Common myeloid progenitor, CD34-positive (primary cell): ENCODE measurements at regions of chr7 and their contacts with region 1.

Region 1: DNA sequence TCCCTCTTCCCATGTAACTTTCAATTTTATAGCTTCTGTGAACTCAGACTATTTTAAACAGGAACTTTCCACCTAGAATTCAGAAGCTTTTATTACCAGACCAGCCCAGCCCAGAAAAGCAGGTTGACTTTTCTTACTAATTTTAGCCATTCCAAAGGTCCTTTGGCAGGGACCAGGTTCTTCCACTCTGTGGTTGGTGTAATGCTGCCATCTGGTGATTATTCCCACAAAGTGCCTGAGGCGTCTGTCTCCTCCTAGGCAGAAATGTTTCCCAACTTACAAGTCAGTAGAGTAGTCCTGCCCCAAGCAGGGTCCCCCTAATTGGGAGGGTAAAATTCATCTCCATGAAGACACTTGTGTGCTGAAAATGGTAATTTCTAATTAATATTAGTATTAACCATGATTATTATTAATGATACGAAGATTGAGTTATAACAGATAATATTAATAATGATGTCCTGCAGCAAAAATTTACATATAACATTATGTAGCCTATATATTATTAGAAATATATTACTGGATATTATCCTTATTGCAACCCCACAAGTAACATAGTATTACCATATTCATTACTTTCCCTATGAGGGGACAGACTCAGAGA is 53.0 kb upstream of the PPP1R17 start:
- DNase-seq: peak; percentile 20 to 54 (median 32)
- H3K4me3 ChIP-seq: no peak overlapping the region
- H3K27ac ChIP-seq: no peak overlapping the region
- H3K4me1 ChIP-seq: no peaks in the 10 kb centered on the region
- H3K27me3 ChIP-seq: no peaks in the 10 kb centered on the region

Region 2: GRCh38 chr7:31134246-31135188 is 499.5 kb before region 1 on chr7:
- CTCF ChIA-PET with region 1: interaction called, 13 read pairs
- POLR2A ChIA-PET with region 1: no interaction called
- DNase-seq: peak; percentile 50 to 71 (median 64)
- H3K4me3 ChIP-seq: no peak overlapping the region
- H3K27ac ChIP-seq: no peak overlapping the region
- H3K4me1 ChIP-seq: no peaks in the 10 kb centered on the region
- H3K27me3 ChIP-seq: peaks cover 0 to 2% (median 0%) of the 10 kb centered on the region in 5 experiments

Region 3: GRCh38 chr7:31478721-31479120 is 155.3 kb before region 1 on chr7:
- CTCF ChIA-PET with region 1: no interaction called
- POLR2A ChIA-PET with region 1: no interaction called
- DNase-seq: peak in 2 of 3 donors; percentile 10 to 14
- H3K4me3 ChIP-seq: no peak overlapping the region
- H3K27ac ChIP-seq: no peak overlapping the region
- H3K4me1 ChIP-seq: no peaks in the 10 kb centered on the region
- H3K27me3 ChIP-seq: peaks cover 0 to 2% (median 0%) of the 10 kb centered on the region in 5 experiments